ENCODE measurements at regions of chr3 and their contacts with region 1.

Region 1: DNA sequence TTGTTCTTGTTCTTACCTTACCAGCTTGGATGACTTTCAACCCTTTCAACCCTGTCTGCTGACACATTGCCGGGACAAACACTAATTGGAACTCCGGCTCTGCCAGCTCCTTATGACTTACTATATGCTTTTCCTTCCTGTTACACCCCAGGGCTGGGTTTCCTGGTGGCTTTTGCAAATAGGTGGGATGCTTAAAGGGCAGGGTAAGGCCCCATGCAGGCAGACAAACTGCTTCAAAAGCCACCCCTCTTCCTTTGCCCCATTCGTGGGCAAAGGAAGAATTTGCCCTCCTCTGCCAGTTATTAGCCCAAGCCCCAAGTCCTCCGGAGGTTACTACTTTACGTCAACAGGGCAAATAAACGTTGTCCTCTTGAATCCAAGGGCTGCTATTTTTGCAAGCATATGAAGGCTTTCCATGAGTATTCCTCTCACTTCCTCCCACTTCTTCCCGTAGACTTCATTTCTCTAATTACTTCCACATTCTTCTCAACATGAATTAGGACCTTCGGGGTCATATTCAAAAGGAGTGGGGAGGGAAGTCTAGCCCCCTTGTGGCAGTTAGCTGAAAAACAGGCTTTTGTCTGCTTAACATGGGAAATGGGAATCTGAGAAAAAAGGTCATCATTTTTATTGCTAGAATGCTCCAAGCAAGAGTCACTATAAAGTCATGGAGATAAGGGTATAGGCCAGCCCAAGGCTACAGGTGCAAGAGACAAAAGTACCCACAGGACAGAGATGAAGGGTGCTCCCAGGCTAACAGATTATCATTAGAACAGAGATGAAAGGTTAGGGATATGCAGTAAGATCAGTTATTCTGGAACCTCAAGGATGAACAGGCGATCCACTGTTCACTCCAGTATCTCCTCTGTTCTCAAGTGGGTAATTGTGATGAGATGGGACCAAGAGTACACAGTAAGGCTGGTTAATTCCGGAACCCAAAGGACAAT is 56.3 kb upstream of the FSTL1 start:
- DNase-seq: peak in 1 of 9 donors; percentile 2
- ATAC-seq: peak; percentile 26
- H3K4me3 ChIP-seq: no peak overlapping the region
- H3K4me3 Mint-ChIP-seq: no peak overlapping the region
- H3K27ac ChIP-seq: no peak overlapping the region
- H3K27ac Mint-ChIP-seq: no peak overlapping the region
- H3K4me1 ChIP-seq: no peaks in the 10 kb centered on the region
- H3K4me1 Mint-ChIP-seq: peaks cover 0 to 1% (median 0%) of the 10 kb centered on the region in 7 donors
- H3K27me3 ChIP-seq: no peaks in the 10 kb centered on the region
- H3K27me3 Mint-ChIP-seq: peaks cover 27 to 45% (median 33%) of the 10 kb centered on the region in 5 donors

Region 2: GRCh38 chr3:120558771-120559241 is 51.7 kb after region 1 on chr3:
- CTCF ChIA-PET with region 1: no interaction called
- POLR2A ChIA-PET with region 1: no interaction called
- intact Hi-C with region 1: loop called in 1 of 2 experiments (anchors 2 kb)
- DNase-seq: peak; percentile 80 to 89 (median 88)
- ATAC-seq: peak; percentile 97
- H3K4me3 ChIP-seq: peak overlapping the region; percentile 61
- H3K4me3 Mint-ChIP-seq: peak overlapping the region; percentile 75 to 87 (median 82)
- H3K27ac ChIP-seq: peak overlapping the region; percentile 58
- H3K27ac Mint-ChIP-seq: peak overlapping the region; percentile 54 to 91 (median 83)
- H3K4me1 ChIP-seq: peaks cover 6% of the 10 kb centered on the region in 2 donors
- H3K4me1 Mint-ChIP-seq: peaks cover 6 to 23% (median 16%) of the 10 kb centered on the region in 7 donors
- H3K27me3 ChIP-seq: peaks cover 0 to 4% of the 10 kb centered on the region in 2 donors
- H3K27me3 Mint-ChIP-seq: peaks cover 0 to 13% (median 7%) of the 10 kb centered on the region in 5 donors

Measured in naive thymus-derived CD4-positive, alpha-beta T cell (primary cell).